ENCODE measurements at regions of chr1 and their contacts with region 1.

Region 1: DNA sequence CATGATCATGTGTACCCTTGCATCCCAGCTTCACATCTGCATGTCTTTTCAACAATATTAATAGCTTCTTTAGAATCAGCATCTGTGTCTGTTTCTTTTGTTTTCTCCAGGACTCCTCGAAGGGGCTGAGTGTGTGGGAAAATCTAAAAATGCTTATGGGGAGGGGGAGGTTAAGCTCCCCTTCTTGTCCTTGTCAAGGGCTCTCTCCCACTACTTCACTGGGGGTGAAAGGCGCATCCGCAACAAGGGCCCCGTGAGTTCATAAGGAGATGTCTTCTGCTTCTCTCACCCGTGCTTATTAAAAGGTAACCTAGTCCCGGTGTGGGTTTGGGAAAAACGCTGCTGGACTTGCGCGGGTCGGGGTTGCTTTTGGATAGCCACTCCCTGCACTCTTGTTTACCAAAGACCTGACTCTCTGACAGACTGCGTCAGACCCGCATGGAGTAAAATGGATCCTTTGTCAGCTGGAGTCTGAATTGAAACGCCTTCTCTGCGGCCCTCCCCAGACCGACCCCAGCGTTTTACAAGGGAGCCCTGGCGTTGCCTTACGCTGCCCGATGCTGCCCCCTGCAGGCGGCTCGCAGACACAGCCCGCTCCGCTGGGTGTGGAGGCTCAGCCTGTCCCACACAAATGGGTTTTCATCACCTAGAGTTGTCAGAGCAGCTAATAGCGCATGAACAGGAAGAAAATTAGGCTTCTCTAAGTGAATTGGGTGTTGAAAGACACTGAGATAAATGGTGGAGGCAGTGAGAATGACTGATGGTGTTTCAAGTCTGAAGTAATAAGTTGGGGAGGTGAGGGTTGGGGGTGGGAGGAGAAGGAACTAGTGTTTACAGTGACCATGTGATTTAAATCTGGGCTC is 53.8 kb downstream of the IER5 start:
- DNase-seq: no peak
- ATAC-seq: peak; percentile 92
- H3K4me3 ChIP-seq: no peak overlapping the region
- H3K27ac ChIP-seq: no peak overlapping the region
- H3K4me1 ChIP-seq: peaks cover 37% of the 10 kb centered on the region
- H3K27me3 ChIP-seq: no peaks in the 10 kb centered on the region
- CTCF ChIP-seq: peak; percentile 94 to 98 (median 98); a peak in 5 of 6 replicates
- EP300 ChIP-seq: no peak
- POLR2A ChIP-seq: no peak
- RAD21 ChIP-seq: peak; percentile 99

Region 2: DNA sequence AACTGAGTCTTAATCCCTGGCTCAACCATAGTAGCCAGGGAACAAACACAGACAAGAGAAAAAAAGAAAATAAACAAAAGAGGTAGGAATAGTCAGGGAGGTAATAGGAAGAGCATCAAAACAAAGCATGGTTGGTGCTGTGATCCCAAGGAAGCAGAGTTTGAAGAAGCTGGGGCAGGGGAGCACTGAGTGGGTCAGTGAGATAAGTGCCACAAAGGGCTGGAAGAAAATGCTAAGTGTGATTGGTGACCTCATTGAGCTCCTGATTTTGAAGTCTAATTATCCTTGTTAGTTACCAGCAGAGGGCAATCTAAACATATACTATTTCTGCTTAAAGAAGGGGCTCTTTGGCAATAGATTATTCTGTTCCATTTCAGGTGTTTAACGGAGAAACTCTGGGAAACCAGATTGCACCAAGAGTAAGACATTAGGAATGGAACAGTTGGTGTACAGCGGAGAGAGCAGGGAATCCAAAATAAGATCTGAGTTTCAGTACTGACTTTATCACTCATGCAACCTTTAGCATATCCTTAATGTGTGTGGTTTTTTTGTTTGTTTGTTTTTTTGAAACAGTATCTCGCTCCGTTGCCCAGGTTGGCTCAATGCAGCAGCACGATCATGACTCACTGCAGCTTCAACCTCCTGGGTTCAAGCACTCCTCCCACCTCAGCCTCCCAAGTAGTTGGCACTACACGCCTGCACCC is 260.4 kb before region 1 on chr1:
- CTCF ChIA-PET with region 1: interaction called, 151 read pairs
- POLR2A ChIA-PET with region 1: interaction called, 17 read pairs
- RAD21 ChIA-PET with region 1: interaction called, 151 read pairs
- SMC1A ChIA-PET with region 1: interaction called, 70 read pairs
- in situ Hi-C with region 1: loop called (anchors 5 kb)
- intact Hi-C with region 1: loop called (anchors 1 kb)
- DNase-seq: no peak
- ATAC-seq: peak; percentile 92
- H3K4me3 ChIP-seq: no peak overlapping the region
- H3K27ac ChIP-seq: no peak overlapping the region
- H3K4me1 ChIP-seq: no peaks in the 10 kb centered on the region
- H3K27me3 ChIP-seq: no peaks in the 10 kb centered on the region
- CTCF ChIP-seq: peak; percentile 38 to 66 (median 49); a peak in 5 of 6 replicates
- EP300 ChIP-seq: no peak
- POLR2A ChIP-seq: no peak
- RAD21 ChIP-seq: peak; percentile 80

Region 3: DNA sequence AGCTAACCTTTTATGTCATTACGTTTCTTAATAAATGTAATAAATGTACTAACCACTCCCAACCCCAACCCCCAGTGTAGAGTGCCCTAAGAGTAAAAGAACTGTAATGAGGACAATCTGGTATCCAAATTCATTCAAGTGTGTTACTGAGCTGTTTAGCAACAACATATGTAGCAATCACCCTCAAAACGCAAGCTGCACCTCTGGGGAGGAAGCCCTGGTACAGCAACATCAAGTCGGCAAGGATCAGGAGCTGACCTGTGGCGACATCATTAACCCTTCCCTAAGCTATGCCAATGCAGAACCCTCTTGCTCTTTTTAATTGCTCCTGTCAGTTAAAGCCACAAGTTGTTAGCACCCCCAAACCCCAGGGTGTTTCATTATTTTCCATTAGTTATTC is 166.8 kb before region 1 on chr1:
- CTCF ChIA-PET with region 1: interaction called, 11 read pairs
- POLR2A ChIA-PET with region 1: no interaction called
- RAD21 ChIA-PET with region 1: no interaction called
- SMC1A ChIA-PET with region 1: interaction called, 13 read pairs
- in situ Hi-C with region 1: no loop called
- intact Hi-C with region 1: no loop called
- DNase-seq: no peak
- ATAC-seq: no peak
- H3K4me3 ChIP-seq: no peak overlapping the region
- H3K27ac ChIP-seq: no peak overlapping the region
- H3K4me1 ChIP-seq: no peaks in the 10 kb centered on the region
- H3K27me3 ChIP-seq: no peaks in the 10 kb centered on the region
- CTCF ChIP-seq: no peak
- EP300 ChIP-seq: no peak
- POLR2A ChIP-seq: no peak
- RAD21 ChIP-seq: no peak

Region 4: DNA sequence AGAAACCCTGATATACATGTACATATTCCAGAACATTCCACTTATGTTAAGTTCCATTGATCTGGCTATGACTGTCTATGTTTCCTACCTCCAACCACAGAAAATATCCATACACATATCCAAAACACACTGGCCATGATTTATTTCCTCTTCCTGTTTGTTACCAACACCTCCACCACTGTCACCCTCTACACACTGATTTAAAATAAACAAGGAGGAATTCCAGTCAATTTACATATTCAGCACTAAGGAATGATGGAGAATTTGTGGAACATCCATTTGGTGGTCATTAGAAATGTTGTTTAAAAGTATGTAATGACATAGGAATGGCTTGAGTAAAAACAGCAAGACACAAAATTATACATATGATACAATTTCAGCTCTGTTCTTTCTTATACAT is 114.1 kb before region 1 on chr1:
- CTCF ChIA-PET with region 1: interaction called, 321 read pairs
- POLR2A ChIA-PET with region 1: interaction called, 8 read pairs
- RAD21 ChIA-PET with region 1: interaction called, 189 read pairs
- SMC1A ChIA-PET with region 1: interaction called, 276 read pairs
- in situ Hi-C with region 1: no loop called
- intact Hi-C with region 1: no loop called
- DNase-seq: no peak
- ATAC-seq: no peak
- H3K4me3 ChIP-seq: no peak overlapping the region
- H3K27ac ChIP-seq: no peak overlapping the region
- H3K4me1 ChIP-seq: peaks cover 19% of the 10 kb centered on the region
- H3K27me3 ChIP-seq: no peaks in the 10 kb centered on the region
- CTCF ChIP-seq: no peak
- EP300 ChIP-seq: no peak
- POLR2A ChIP-seq: no peak
- RAD21 ChIP-seq: no peak

Region 5: DNA sequence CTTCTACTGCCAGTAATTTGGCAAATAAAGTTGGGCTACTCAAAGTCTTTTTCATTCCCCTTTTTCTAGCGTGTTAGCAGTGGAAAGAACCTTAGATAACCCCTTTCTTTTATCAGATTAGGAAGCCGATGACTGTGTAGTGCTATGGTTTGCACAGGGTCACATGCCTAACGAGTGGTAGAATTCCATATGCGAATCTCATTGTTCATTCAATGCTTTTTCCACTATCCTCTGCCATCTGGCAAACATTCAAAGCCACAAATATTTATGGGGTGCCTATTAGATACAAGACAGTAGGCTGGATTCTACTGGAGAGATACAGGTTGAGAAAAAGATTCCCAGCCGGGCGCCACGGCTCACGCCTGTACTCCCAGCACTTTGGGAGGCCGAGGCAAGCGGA is 68.7 kb before region 1 on chr1:
- CTCF ChIA-PET with region 1: interaction called, 49 read pairs
- POLR2A ChIA-PET with region 1: interaction called, 3 read pairs
- RAD21 ChIA-PET with region 1: interaction called, 61 read pairs
- SMC1A ChIA-PET with region 1: interaction called, 103 read pairs
- in situ Hi-C with region 1: no loop called
- intact Hi-C with region 1: no loop called
- DNase-seq: no peak
- ATAC-seq: no peak
- H3K4me3 ChIP-seq: no peak overlapping the region
- H3K27ac ChIP-seq: no peak overlapping the region
- H3K4me1 ChIP-seq: peaks cover 19% of the 10 kb centered on the region
- H3K27me3 ChIP-seq: no peaks in the 10 kb centered on the region
- CTCF ChIP-seq: no peak
- EP300 ChIP-seq: no peak
- POLR2A ChIP-seq: no peak
- RAD21 ChIP-seq: no peak

Region 6: GRCh38 chr1:181105134-181106021 is 36.9 kb before region 1 on chr1:
- CTCF ChIA-PET with region 1: interaction called, 1,067 read pairs
- POLR2A ChIA-PET with region 1: interaction called, 21 read pairs
- RAD21 ChIA-PET with region 1: interaction called, 966 read pairs
- SMC1A ChIA-PET with region 1: interaction called, 1,399 read pairs
- in situ Hi-C with region 1: no loop called
- intact Hi-C with region 1: no loop called
- DNase-seq: no peak
- ATAC-seq: peak; percentile 82
- H3K4me3 ChIP-seq: peak overlapping the region; percentile 94
- H3K27ac ChIP-seq: peak overlapping the region; percentile 70
- H3K4me1 ChIP-seq: peaks cover 44% of the 10 kb centered on the region
- H3K27me3 ChIP-seq: no peaks in the 10 kb centered on the region
- CTCF ChIP-seq: no peak
- EP300 ChIP-seq: no peak
- POLR2A ChIP-seq: peak; percentile 65
- RAD21 ChIP-seq: no peak

Region 7: DNA sequence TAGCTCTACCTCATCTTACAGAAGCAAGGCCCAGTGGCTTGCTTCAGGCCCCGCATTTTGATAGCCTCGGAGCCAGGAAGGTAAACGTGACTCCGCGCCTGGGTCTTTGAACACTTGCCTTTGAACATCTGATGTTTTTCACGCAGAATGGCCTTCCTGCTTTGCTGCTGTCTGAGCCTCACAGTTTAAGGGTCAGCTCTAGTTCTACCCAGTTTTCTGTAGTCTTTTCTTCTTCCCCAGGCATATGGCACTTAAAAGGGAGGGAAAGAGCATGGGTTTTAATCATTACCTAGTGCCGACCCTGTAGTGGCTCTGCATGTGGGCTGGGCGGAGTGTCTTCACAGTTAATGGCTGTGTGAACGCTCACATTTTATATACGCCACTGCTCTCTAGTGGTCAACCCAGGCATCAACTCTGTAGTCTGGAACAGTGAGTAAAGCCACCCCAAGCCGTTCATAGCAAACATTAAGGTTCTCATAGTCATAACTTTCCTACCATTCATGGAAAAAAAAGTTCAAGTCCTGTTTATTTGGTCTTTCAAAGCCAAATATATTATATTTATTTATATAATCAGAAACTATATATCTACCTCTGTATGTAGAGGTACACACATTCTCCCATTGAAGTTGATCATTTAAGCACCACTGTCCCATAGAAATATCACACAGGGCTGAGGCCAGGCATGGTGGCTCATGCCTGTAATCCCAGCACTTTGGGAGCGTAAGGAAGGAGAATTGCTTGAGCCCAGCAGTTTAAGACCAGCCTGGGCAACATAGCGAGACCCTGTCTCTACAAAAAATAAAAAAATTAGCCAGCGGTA is 24.3 kb after region 1 on chr1:
- CTCF ChIA-PET with region 1: interaction called, 81 read pairs
- POLR2A ChIA-PET with region 1: interaction called, 4 read pairs
- RAD21 ChIA-PET with region 1: interaction called, 26 read pairs
- SMC1A ChIA-PET with region 1: interaction called, 71 read pairs
- in situ Hi-C with region 1: no loop called
- intact Hi-C with region 1: loop called (anchors 1 kb)
- DNase-seq: no peak
- ATAC-seq: peak; percentile 100
- H3K4me3 ChIP-seq: no peak overlapping the region
- H3K27ac ChIP-seq: no peak overlapping the region
- H3K4me1 ChIP-seq: no peaks in the 10 kb centered on the region
- H3K27me3 ChIP-seq: no peaks in the 10 kb centered on the region
- CTCF ChIP-seq: peak; percentile 83 to 88 (median 84)
- EP300 ChIP-seq: no peak
- POLR2A ChIP-seq: no peak
- RAD21 ChIP-seq: peak; percentile 94

Region 8: GRCh38 chr1:181222972-181223505 is 80.7 kb after region 1 on chr1:
- CTCF ChIA-PET with region 1: no interaction called
- POLR2A ChIA-PET with region 1: no interaction called
- RAD21 ChIA-PET with region 1: no interaction called
- SMC1A ChIA-PET with region 1: no interaction called
- in situ Hi-C with region 1: no loop called
- intact Hi-C with region 1: no loop called
- DNase-seq: no peak
- ATAC-seq: no peak
- H3K4me3 ChIP-seq: no peak overlapping the region
- H3K27ac ChIP-seq: no peak overlapping the region
- H3K4me1 ChIP-seq: no peaks in the 10 kb centered on the region
- H3K27me3 ChIP-seq: peaks cover 0 to 2% of the 10 kb centered on the region in 2 experiments; a peak in 2 of 4 replicates
- CTCF ChIP-seq: no peak
- EP300 ChIP-seq: no peak
- POLR2A ChIP-seq: no peak
- RAD21 ChIP-seq: no peak

Measured in GM12878 (cell line).